ENCODE measurements at regions of chr1 and their contacts with region 1.

Region 1: DNA sequence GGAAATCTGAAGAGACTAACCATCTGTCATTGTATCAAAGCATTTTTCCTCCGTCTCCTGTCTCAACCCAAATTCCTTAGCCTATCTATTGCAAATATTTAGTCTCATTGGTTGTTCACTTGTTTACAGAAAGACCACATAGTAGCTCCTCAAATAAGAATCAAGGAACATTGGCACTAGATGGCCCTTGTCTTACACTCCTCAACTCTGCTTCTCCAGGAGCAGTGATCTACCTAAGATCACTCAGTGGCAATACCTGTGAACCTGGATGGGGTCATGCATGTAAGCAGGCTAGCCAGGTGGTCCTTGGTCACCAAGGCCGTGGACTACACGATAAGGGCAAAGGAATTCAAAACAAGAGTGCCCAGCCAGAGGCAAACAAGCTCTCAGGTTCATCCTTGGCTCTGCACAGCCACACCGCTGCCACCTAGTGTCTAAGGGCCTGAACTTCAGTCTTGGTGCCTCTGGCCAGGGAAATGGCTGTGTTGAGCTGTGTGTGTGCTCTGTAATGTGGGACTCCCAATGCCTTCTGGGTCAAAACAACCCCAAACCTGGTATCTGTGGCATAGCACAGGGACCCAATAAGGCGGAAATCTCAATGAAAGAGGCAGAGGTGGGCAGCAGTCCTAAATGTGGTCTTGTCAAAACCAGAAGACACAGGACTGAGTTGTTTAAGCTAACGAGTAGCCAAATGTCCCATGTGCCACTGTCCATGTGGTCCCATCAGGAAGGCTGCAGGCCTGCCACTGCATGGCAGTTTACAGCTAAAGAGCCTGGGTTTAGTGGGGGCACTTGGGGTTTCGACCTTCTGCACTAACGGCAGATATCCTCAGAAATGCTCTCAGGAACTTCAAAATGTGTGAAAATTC is 54.5 kb downstream of the GPR161 start:
- DNase-seq: no peak

Region 2: GRCh38 chr1:167721617-167722151 is 360.6 kb before region 1 on chr1 and contains the start of gene MPZL1:
- intact Hi-C with region 1: loop called (anchors 5 kb)
- DNase-seq: peak; percentile 99
- total RNA-seq, gene MPZL1: 35.7 TPM

Region 3: DNA sequence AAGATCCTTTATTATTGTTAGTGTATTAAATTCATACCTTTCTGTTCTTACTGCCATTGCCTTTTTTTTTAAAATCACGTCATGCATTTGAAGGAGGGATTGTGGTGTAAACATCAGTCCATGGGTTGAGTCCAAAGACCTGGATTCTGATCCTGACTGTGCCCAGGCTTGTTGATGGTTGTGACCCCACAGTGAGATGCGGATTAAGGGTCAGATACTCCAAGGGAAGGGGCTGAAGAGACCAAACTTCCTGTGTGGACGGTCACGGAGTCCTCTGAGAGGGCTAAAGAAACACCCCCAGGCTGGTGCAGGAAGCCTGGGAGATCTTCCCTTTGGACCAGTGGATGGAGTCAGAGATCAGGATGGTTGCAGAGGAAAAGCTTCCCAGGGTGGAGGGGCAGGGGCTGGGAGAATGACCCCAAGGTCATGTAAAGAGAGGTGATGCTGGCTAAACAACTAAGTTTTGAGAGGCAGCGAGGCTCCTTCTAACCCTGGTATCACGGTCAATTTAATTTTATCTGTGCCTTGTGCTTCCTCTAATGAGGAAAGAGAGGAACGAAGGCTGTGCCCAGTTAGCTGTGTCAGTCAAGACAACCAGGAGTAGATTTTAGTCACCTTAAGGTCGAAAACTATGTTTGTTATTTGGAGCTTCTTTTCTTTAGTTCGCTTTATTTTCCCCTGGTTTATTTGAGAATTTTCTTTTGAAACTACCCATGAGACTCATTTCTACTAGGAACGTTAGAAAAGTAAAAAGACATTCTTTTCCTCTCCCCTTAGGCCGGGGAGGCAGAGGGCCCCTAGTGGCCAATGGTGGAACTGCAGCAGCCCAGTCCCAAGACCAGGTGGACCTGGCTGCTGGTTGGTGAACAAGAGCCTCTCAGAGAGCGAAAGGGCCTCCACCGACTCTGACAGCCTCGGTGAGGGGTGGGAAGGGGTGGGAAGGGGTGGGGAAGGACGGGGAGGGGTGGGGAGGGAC is 63.2 kb after region 1 on chr1:
- intact Hi-C with region 1: loop called (anchors 2 kb)
- DNase-seq: peak; percentile 91

Region 4: GRCh38 chr1:169115891-169116585 is 1033.8 kb after region 1 on chr1:
- intact Hi-C with region 1: no loop called
- DNase-seq: no peak

Measured in cardiac septum (tissue), 1 donor.